PC-3 (cell line): ENCODE measurements at regions of chr4 and their contacts with region 1.

Region 1: DNA sequence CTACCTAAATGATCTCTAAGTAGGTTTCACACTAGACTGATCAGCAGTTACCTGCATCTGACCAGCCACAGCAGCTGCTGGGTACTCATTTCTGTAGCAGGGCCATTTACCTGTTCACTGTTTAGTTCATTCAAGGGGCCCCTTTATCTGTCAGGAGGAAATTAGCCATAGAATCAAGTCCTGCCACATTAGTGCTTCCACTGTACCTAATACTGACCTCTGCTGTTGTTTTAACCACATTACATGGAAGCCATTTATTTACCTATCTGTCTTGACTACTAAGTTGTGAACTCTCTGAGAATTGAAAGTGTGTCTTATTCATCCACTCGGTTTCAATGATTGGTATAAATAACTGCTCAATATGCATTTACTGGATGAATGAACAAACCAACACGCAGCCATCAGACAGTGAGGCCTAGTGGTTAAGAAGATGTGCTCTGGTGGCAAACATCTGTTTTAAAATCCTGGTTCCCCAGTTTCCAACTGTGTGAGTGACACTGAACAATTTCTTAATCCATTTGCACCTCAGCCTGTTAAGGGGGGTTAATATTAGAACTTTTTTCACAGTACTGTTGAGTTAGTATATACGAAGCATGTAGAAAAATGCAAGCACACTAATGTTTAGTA is 30.0 kb upstream of the ANXA5 start:
- DNase-seq: peak; percentile 79
- ATAC-seq: peak; percentile 18; the same call in 1 of the 2 replicates
- H3K4me3 ChIP-seq: no peak overlapping the region
- H3K27ac ChIP-seq: 0 out of 2 replicates have a peak overlapping the region, but pooled peaks have one; percentile 97
- H3K4me1 ChIP-seq: peaks cover 27% of the 10 kb centered on the region
- H3K27me3 ChIP-seq: no peaks in the 10 kb centered on the region
- CTCF ChIP-seq: peak; percentile 74

Region 2: DNA sequence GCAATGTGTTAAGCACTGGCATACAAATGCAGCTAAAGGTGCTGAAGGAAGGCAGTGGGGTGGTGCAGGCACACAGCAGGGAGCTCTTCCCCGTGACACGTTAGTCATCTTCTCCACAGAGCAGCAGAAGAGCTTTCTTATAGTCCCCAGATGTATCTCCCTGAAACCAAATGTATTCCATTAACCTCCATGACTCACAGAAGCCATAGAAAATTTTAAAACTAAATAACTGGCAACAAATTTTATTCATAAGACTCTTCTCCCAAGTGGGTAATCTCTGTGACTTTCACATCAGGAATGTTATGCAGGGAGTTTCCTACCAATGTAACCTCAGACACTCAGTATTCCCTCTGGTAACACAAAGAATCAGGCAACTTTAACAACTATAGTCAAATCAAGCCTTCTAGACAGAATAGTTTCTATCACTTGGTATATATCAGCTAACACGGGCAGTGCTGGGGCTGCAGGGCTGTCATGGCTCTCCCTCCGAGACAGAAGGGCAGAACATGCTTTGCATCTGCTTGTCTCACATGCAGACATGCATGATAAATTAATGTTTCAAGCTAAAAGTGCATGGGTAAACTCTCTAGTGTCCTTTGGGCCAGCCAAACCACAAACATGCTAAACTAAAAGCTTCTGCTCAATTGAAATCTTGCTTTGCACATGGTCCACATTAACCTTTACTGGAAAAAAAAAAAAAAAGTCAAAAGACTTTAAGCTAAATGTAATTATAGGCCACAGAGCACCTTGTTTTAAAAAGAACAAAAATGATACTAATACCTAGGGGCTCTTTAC is 58.2 kb before region 1 on chr4:
- CTCF ChIA-PET with region 1: no interaction called
- POLR2A ChIA-PET with region 1: no interaction called
- intact Hi-C with region 1: loop called (anchors 2 kb)
- DNase-seq: peak; percentile 59
- ATAC-seq: peak; percentile 61
- H3K4me3 ChIP-seq: no peak overlapping the region
- H3K27ac ChIP-seq: peak overlapping the region; percentile 70
- H3K4me1 ChIP-seq: peaks cover 27% of the 10 kb centered on the region
- H3K27me3 ChIP-seq: no peaks in the 10 kb centered on the region
- CTCF ChIP-seq: no peak

Region 3: DNA sequence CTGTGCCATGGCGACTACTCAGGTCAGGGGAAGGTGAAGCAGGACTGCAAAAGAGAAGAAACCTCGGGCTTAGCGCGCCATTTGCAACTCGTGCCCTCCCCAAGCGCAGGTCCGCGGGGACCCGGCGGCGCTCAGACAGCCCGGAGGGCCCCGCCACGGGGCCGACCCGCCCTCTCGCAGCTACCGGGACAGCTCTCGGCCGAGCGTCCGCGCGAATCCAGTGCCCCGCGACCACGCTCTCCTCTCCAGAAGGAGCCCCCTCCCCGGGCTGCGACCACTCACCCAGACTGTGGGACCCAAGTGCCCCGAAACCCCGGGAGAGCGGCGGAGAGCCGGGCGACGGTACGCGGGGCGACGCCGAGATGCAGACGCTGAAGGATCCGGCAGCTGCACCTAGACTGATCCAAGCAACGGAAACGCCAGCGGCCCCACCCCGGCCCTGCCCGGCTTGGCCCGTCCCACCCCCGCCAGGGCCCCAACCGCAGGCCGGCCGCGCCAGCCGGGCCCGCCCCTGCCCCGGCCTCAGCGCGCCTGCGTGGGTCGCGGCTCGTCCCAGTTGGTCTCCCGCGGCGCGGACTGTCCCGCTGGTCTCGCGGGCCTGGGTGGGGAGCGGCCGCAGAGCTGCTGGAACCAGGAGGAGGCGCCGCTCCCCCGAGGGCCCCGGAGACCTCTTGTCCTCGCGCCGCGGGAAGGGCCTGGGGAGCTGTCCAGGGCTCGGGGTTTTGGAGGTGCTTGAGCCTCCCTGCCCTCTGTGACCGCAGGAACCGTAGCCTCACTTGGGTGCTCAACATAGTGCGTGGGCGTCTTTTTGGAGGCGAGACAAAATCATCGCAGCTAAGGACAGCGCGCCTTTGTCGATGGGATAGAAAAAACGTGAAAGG is 29.9 kb before region 1 on chr4 and contains the start of gene ANXA5:
- CTCF ChIA-PET with region 1: interaction called, 4 read pairs
- POLR2A ChIA-PET with region 1: interaction called, 7 read pairs
- intact Hi-C with region 1: loop called (anchors 1 kb)
- DNase-seq: peak; percentile 86
- ATAC-seq: peak; percentile 84
- H3K4me3 ChIP-seq: peak within 1 kb of the TSS; percentile 89
- H3K27ac ChIP-seq: peak within 1 kb of the TSS; percentile 90
- H3K4me1 ChIP-seq: peaks cover 21% of the 10 kb centered on the region
- H3K27me3 ChIP-seq: no peaks in the 10 kb centered on the region
- CTCF ChIP-seq: peak; percentile 30; the same call in 1 of the 2 replicates
- total RNA-seq, gene ANXA5: 271 and 280 TPM in 2 replicates

Region 4: GRCh38 chr4:121711263-121712000 is 15.3 kb before region 1 on chr4:
- CTCF ChIA-PET with region 1: no interaction called
- POLR2A ChIA-PET with region 1: no interaction called
- intact Hi-C with region 1: loop called (anchors 1 kb)
- DNase-seq: peak; percentile 93
- ATAC-seq: peak; percentile 99
- H3K4me3 ChIP-seq: peak overlapping the region; percentile 71
- H3K27ac ChIP-seq: peak overlapping the region; percentile 91
- H3K4me1 ChIP-seq: peaks cover 27% of the 10 kb centered on the region
- H3K27me3 ChIP-seq: no peaks in the 10 kb centered on the region
- CTCF ChIP-seq: no peak

Region 5: GRCh38 chr4:121800961-121801714 is 74.4 kb after region 1 on chr4 and contains the start of gene EXOSC9:
- CTCF ChIA-PET with region 1: no interaction called
- POLR2A ChIA-PET with region 1: no interaction called
- intact Hi-C with region 1: loop called (anchors 2 kb)
- DNase-seq: peak; percentile 93
- ATAC-seq: peak; percentile 83
- H3K4me3 ChIP-seq: peak within 1 kb of the TSS; percentile 84
- H3K27ac ChIP-seq: peak within 1 kb of the TSS; percentile 27; the same call in 1 of the 2 replicates
- H3K4me1 ChIP-seq: peaks cover 19% of the 10 kb centered on the region
- H3K27me3 ChIP-seq: no peaks in the 10 kb centered on the region
- CTCF ChIP-seq: no peak
- total RNA-seq, gene EXOSC9: 19.0 and 23.4 TPM in 2 replicates